Activated T-helper 2 cell treated with anti-CD3 and anti-CD28 coated beads, Interferon-gamma antibody, Interleukin-2, Interleukin-4, amounts not matched to agents 10 μg/mL and 5 μg/mL and 100 μg/mL, durations not matched to agents 14 hours and 24 hours and 36 hours (primary cell): ENCODE measurements at regions of chr14 and their contacts with region 1.

Region 1: DNA sequence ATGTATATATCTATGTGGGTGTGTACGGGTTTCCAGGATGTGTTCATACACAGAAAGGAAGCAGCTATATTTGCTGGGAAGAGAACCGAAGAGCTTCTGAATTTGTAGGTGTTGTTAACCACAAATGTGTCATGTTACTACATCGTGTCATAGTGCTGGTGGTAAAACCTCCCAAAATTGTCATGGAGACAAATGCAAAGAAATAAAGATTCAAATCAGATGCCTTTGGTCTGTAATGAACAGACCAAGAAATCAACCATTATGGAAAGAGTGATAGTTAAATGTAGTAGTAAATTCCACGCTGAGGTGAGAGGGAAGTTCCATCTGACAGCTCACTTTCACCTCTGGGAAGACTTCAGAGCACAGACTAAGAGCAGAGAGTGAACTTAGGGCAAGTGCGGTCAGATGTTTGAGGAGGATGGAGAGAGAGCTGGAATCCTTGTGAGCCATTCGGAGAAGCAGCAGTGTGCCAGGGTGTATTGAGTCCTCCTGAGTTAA is 487.5 kb downstream of the TMEM121 start:
- DNase-seq: no peak
- H3K4me3 Mint-ChIP-seq: peak overlapping the region; percentile 53
- H3K27ac Mint-ChIP-seq: peak overlapping the region; percentile 84
- H3K4me1 Mint-ChIP-seq: peaks cover 49% of the 10 kb centered on the region
- H3K27me3 Mint-ChIP-seq: peaks cover 2% of the 10 kb centered on the region

Region 2: DNA sequence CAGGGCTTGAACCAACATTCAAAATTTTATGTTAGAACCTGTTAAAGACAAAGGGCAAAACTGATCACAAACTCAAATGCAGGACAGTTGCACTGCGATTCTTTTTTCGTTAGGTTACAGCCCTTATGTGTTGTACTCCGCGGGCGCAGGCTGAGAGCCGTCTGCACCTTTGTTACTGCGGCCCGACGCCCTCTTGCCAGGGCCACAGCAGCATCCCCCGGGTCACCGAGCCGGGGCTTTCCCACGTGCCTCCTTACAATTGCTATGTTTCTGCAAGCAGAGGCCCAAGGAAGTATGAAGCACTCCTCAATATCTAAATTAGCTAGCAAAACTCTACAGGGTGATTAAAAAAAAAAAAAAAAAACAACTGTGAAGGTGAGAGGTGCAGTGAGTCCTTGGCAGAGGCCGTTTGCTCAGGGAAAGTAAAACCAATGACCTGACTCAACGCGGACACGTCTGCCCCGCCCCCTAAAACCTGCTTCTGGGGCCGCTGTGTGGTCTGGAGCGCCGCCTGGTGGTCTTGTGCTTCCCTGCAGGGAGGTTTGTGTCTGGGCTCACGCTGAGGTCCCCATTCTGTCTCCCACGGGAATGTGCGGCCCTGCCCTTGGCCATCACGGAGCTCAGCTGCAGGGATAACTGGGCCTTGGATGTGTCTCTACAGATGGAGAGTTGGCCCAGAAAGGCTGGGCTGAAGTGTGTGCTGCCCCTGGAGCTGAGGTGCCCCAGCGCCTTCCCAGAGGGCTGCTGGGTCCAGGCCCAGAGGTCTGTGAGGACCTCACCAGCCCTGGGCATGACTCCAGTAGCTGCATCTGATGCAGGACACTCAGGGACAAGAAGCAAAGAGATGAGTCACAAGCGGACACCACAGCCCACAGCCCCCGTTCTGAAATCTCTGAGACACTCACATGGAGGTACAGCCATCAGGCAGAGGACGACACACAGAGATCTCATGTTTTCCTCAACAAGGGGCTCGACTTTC is 69.0 kb before region 1 on chr14:
- intact Hi-C with region 1: loop called (anchors 5 kb)
- DNase-seq: peak; percentile 69
- H3K4me3 Mint-ChIP-seq: no peak overlapping the region
- H3K27ac Mint-ChIP-seq: no peak overlapping the region
- H3K4me1 Mint-ChIP-seq: peaks cover 3% of the 10 kb centered on the region
- H3K27me3 Mint-ChIP-seq: no peaks in the 10 kb centered on the region

Region 3: DNA sequence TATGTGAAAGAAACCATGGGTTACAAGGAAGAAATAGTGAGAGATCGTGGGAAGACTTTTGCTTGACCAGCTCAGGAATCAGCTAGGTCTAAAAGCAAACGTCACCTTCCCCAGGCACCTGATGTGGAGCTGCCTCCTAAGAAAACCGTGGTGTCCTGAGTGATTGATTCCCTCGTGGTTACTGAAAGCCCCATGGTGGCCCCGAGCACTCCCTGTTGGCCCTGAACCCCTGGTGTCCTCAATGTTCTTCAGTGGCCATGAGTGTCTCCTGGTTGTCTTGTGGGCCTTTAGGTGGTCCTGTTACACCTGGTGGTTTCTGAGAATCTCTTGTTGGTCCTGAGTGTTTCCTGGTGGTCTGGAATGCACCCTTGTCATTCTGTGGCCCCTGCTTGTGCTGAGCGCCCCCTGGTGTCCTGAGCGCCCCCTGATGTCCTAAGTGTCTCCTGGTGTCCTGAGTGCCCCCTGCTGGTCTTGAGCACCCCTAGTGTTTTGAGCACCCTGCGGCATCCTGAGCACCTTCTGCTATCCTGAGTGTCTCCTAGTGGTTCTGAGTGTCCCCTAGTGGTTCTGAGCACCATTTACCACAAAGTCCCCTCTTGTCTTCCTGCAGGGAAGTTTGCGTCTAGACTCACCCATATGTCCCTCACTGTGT is 31.1 kb after region 1 on chr14:
- intact Hi-C with region 1: loop called (anchors 2 kb)
- DNase-seq: peak; percentile 69
- H3K4me3 Mint-ChIP-seq: no peak overlapping the region
- H3K27ac Mint-ChIP-seq: no peak overlapping the region
- H3K4me1 Mint-ChIP-seq: peaks cover 3% of the 10 kb centered on the region
- H3K27me3 Mint-ChIP-seq: peaks cover 8% of the 10 kb centered on the region

Region 4: DNA sequence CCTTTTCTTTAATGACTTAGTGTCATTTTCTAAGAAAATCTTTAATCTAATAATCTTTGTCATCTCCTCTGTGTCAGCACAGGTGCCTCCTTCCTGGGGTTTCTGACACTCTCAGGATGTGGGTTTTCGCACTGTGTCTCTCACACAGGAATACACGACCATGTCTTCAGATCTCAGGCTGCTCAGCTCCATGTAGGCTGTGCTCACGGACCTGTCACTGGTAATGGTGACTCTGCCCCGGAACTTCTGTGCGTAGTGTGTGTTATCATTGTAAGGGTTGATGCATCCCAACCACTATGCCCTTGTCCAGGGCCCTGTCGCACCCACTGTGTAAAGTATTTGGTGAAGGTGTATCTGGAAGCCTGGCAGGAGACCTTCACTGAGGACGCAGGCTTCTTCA is 160.3 kb after region 1 on chr14:
- intact Hi-C with region 1: loop called (anchors 10 kb)
- DNase-seq: peak; percentile 52
- H3K4me3 Mint-ChIP-seq: peak overlapping the region; percentile 22
- H3K27ac Mint-ChIP-seq: peak overlapping the region; percentile 39
- H3K4me1 Mint-ChIP-seq: peaks cover 46% of the 10 kb centered on the region
- H3K27me3 Mint-ChIP-seq: peaks cover 33% of the 10 kb centered on the region

Region 5: DNA sequence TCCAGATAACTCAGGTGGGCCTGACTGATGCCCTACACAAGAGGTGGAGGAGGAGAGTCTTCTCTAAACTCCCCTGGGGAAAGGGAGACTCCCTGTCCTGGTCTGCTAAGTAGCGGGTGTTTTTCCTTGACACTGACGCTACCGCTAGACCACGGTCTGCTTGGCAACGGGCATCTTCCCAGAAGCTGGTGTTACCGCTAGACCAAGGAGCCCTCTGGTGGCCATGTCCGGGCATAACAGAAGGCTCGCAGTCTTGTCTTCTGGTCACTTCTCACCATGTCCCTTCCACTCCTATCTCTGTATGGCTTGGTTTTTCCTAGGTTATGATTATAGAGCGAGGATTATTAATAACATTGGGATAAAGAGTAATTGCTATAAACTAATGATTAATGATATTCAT is 477.9 kb after region 1 on chr14:
- intact Hi-C with region 1: no loop called
- DNase-seq: no peak
- H3K4me3 Mint-ChIP-seq: no peak overlapping the region
- H3K27ac Mint-ChIP-seq: no peak overlapping the region
- H3K4me1 Mint-ChIP-seq: peaks cover 36% of the 10 kb centered on the region
- H3K27me3 Mint-ChIP-seq: peaks cover 13% of the 10 kb centered on the region